Common myeloid progenitor, CD34-positive (primary cell): ENCODE measurements at regions of chr20 and their contacts with region 1.

Region 1: DNA sequence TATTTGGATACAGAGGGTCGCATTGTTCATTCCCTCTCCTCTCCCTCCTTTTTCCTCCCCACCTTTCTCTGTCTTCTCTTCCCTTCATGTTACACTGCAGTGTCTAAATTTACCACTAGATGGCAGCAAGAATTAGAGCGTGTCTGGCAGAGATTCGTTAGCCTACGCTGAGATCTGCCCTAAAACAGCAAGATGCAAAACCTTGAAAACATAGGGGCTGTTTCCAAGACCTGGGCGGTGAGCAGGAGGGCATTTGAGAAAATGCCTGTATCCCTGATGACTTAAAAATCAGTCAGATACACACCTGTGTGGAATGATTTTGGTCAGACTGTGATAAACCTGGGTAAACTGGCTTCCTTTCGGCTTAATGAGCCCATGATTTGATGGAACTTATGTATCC is 101.5 kb upstream of the ISM1 start:
- DNase-seq: peak; percentile 44 to 81 (median 75)
- H3K4me3 ChIP-seq: no peak overlapping the region
- H3K27ac ChIP-seq: no peak overlapping the region
- H3K4me1 ChIP-seq: no peaks in the 10 kb centered on the region
- H3K27me3 ChIP-seq: peaks cover 0 to 16% (median 0%) of the 10 kb centered on the region in 5 experiments

Region 2: GRCh38 chr20:13200767-13201500 is 81.4 kb after region 1 on chr20:
- CTCF ChIA-PET with region 1: no interaction called
- POLR2A ChIA-PET with region 1: no interaction called
- DNase-seq: no peak
- H3K4me3 ChIP-seq: no peak overlapping the region
- H3K27ac ChIP-seq: no peak overlapping the region
- H3K4me1 ChIP-seq: no peaks in the 10 kb centered on the region
- H3K27me3 ChIP-seq: peaks cover 0 to 2% (median 0%) of the 10 kb centered on the region in 5 experiments

Region 3: DNA sequence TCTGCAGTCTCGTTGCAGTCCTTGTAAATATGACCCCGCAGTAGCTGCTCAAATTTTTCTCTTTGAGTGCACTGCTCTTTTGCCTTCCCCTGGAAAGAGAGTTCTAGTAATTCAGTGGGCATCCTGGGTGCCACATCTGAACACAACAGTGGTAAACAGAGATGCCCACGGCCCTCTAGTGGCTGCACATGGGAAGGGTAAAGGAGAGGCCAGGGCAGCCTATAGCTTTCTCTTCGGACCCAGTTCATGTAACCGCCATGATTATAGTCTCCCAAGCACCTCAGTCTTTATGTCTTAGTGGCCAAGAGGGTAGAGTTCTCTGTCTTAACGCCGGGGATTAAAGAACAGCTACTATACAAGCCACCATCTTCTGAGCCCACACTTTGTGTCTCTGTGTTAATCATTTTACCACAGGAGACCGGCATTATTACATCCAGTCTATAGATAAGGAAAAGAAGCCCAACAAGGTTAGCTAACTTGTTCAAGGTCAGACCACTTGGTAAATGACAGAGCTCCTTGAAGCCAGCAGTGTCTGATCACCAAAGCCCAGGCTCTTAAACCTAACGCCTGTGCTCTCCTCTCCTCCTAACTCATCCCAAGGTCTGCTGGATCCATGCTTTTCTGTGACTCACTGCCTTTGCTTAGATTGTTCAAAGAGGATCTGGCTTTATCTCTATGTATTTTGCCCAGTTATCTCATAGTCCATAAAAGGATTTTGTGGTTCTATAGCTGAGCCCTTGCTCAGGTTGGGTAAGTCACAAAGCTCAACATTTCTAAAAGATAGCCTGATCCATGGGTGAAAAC is 183.3 kb after region 1 on chr20:
- CTCF ChIA-PET with region 1: interaction called, 19 read pairs
- POLR2A ChIA-PET with region 1: no interaction called
- DNase-seq: peak; percentile 2 to 46 (median 37)
- H3K4me3 ChIP-seq: no peak overlapping the region
- H3K27ac ChIP-seq: no peak overlapping the region
- H3K4me1 ChIP-seq: no peaks in the 10 kb centered on the region
- H3K27me3 ChIP-seq: peaks cover 0 to 2% (median 0%) of the 10 kb centered on the region in 5 experiments